Posterior vena cava (tissue), 2 donors: ENCODE measurements at regions of chr6 and their contacts with region 1.

Region 1: DNA sequence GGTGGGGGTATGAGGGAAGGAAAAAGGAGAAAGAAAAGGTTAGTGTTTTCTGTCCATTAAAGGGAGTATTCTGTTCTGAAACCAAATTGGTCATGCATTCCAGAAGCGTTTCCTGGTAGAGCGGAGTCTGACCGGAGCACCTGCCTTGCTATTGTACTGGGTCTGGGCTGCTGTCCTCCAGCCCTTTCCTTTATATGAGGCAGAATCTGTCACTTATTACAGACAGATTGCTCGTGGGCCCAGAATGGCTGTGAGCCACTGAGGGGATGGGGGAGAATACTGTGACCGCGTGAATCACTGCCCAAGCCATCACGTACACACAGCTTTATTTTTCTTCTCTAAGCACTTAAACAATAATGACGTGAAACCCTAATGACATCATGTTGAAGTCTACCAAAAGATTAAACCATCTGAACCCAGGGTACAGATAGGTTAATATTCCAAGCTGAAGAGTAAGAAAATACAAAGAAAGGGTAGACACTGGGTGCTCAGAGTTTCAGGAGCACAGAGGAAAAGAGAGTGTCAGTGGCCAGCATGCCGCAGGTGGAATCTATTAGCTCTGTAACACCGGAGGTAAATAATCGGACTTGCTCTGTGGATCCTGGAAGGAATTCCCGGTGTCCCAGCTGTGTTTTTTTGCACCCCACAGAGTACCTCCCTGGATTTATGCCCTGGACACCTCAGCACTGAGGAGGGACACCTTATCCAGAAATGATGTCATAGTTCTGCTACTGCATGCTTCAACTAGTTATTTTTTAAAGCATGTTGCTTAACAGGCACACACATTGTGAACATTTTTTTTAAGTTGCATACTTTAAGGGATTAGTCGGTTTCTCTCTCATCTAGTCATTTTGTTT is 573.3 kb downstream of the PKHD1 start:
- DNase-seq: no peak

Region 2: DNA sequence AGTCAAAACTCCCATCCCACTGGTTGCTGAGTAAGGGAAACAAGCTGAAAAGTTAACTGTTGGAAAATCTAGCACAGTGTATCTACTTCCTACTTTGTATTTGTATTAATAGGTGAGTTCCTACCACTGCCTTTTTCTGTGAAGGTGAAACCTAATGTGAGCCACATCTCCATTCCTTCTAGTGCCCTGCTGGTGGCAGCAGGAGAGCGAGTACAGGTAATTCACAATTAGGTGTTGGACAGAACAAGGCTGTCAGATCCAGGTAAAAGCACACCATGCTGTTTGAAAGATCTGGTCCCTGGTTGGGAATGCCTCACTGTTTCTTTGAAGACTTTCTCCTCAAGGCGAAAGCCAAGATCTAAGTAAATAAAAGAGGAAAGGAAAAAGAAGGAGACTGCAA is 44.9 kb after region 1 on chr6:
- intact Hi-C with region 1: loop called in 1 of 2 experiments (anchors 1 kb)
- DNase-seq: no peak

Region 3: DNA sequence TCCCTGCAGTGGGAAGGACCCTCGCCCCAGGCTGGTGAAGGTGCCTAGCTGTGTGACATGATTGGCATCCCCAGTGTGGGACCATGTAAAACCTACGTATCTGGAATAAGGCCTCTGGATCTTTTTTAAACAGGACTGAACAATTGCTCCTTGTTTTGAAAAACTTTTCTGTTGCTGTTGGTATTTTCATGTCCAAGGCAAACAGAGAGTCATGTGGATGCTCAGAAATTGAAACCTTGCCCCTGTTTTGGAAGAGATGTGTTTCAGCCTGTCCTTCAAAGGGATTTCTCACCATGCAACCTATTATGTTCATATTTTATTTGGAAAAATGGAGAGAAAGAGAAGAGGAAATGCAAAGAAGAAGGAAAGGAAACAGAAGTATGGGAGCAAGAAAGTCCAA is 211.0 kb after region 1 on chr6:
- intact Hi-C with region 1: no loop called
- DNase-seq: no peak